Heart right ventricle (tissue), 16 donors: ENCODE measurements at regions of chr1 and their contacts with region 1.

Region 1: DNA sequence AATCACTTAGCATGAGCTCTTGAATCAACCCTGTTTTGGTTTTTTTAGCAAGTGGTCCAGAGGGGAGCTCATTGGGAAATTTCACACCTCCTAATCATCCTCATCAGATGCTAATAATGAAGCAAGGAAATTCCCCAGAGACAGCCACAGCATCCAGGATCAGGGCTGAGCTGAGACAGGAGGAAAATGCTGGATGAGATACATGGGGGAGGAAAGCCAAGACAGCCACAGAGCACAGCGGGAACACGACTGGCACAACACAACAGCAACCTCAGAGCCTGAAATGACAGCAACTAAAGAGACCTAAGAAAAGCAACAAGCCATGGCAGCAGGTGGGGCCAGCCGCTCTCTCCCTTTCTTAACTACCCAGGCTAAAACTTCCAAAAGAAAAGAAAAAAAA is 70.4 kb downstream of the UBR4 start:
- DNase-seq: no peak
- ATAC-seq: no peak
- H3K4me3 ChIP-seq: no peak overlapping the region
- H3K27ac ChIP-seq: peak overlapping the region in 5 of 10 donors; percentile 38 to 80 (median 64)
- H3K4me1 ChIP-seq: peaks cover 0 to 18% (median 6%) of the 10 kb centered on the region in 9 donors
- H3K27me3 ChIP-seq: no peaks in the 10 kb centered on the region
- CTCF ChIP-seq: no peak

Region 2: GRCh38 chr1:18875107-18875795 is 264.5 kb before region 1 on chr1:
- intact Hi-C with region 1: no loop called
- DNase-seq: peak; percentile 77 to 79
- ATAC-seq: peak; percentile 47 to 84 (median 77)
- H3K4me3 ChIP-seq: no peak overlapping the region
- H3K27ac ChIP-seq: no peak overlapping the region
- H3K4me1 ChIP-seq: peaks cover 0 to 11% (median 6%) of the 10 kb centered on the region in 9 donors
- H3K27me3 ChIP-seq: no peaks in the 10 kb centered on the region
- CTCF ChIP-seq: peak; percentile 55 to 87 (median 86)

Region 3: DNA sequence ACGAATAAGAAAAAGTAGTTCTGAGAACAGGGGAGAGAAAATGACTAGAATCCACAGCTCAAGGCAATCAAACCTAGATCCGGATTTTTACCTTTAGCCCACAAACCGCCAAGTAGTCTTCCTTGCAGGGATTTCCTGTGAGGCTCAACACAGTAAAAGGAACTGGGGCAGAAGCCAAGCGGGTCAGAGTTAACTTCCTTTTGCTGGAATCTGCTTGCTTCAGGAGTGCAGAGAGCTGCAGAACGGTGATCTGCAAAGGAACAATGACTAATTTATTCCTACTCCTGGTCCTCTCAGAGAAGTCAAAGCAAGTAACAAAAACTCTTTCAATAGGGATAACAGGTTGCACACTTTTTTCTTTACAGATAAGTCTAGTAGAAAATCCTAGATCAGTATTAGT is 17.0 kb after region 1 on chr1:
- intact Hi-C with region 1: loop called in 1 of 10 experiments (anchors 1 kb)
- DNase-seq: peak in 1 of 2 donors; percentile 82
- ATAC-seq: peak; percentile 79 to 95 (median 90)
- H3K4me3 ChIP-seq: no peak overlapping the region
- H3K27ac ChIP-seq: peak overlapping the region in 8 of 10 donors; percentile 38 to 86 (median 63)
- H3K4me1 ChIP-seq: peaks cover 0 to 38% (median 21%) of the 10 kb centered on the region in 9 donors
- H3K27me3 ChIP-seq: no peaks in the 10 kb centered on the region
- CTCF ChIP-seq: no peak

Region 4: DNA sequence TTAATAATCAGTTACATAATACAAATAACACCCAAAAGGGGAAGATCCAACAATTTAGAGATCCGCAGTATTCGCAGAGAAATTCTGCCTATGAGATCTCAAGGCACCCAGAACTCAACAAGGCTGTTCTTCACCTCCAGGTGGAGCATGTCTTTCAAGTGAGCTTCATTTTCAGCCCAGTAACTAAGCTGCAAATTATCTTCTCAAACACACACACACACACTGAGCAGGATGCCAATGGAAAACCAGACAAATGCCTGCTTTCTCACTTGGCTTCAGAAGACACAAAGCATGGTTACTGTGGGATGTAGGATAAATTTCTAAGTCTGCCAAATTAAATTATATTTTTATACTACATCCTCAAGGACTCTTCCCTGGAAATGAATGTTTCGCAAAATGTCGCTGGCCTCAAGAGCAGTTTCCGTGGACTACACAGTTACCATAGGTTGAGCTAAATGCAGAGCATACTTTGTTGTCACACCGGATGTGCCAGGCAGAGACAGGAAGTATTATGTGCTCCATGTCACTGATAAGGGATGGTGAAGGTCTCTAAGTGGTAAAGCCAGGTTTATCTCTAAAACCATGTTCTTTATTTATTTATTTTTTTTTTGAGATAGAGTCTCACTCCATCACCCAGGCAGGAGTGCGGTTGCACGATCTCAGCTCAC is 40.0 kb after region 1 on chr1:
- intact Hi-C with region 1: loop called in 1 of 10 experiments (anchors 10 kb)
- DNase-seq: no peak
- ATAC-seq: peak in 7 of 8 donors; percentile 44 to 74 (median 68)
- H3K4me3 ChIP-seq: no peak overlapping the region
- H3K27ac ChIP-seq: peak overlapping the region in 1 of 10 donors; percentile 13
- H3K4me1 ChIP-seq: peaks cover 0 to 11% (median 0%) of the 10 kb centered on the region in 9 donors
- H3K27me3 ChIP-seq: no peaks in the 10 kb centered on the region
- CTCF ChIP-seq: peak in 8 of 9 donors; percentile 16 to 58 (median 41)